Thyroid gland (tissue), 4 donors: ENCODE measurements at regions of chr1 and their contacts with region 1.

Region 1: GRCh38 chr1:27598902-27599528 is 4.9 kb downstream of the AHDC1 start:
- DNase-seq: peak; percentile 74 to 84
- H3K4me3 ChIP-seq: no peak overlapping the region
- H3K27ac ChIP-seq: peak overlapping the region; percentile 96 to 98 (median 97)
- H3K4me1 ChIP-seq: peaks cover 82 to 84% of the 10 kb centered on the region in 2 donors
- H3K27me3 ChIP-seq: no peaks in the 10 kb centered on the region
- CTCF ChIP-seq: no peak
- POLR2A ChIP-seq: no peak

Region 2: GRCh38 chr1:27481994-27482620 is 116.9 kb before region 1 on chr1:
- intact Hi-C with region 1: no loop called
- DNase-seq: no peak
- H3K4me3 ChIP-seq: no peak overlapping the region
- H3K27ac ChIP-seq: peak overlapping the region in 1 of 3 donors; percentile 2
- H3K4me1 ChIP-seq: peaks cover 23 to 41% of the 10 kb centered on the region in 2 donors
- H3K27me3 ChIP-seq: no peaks in the 10 kb centered on the region
- CTCF ChIP-seq: no peak
- POLR2A ChIP-seq: no peak

Region 3: DNA sequence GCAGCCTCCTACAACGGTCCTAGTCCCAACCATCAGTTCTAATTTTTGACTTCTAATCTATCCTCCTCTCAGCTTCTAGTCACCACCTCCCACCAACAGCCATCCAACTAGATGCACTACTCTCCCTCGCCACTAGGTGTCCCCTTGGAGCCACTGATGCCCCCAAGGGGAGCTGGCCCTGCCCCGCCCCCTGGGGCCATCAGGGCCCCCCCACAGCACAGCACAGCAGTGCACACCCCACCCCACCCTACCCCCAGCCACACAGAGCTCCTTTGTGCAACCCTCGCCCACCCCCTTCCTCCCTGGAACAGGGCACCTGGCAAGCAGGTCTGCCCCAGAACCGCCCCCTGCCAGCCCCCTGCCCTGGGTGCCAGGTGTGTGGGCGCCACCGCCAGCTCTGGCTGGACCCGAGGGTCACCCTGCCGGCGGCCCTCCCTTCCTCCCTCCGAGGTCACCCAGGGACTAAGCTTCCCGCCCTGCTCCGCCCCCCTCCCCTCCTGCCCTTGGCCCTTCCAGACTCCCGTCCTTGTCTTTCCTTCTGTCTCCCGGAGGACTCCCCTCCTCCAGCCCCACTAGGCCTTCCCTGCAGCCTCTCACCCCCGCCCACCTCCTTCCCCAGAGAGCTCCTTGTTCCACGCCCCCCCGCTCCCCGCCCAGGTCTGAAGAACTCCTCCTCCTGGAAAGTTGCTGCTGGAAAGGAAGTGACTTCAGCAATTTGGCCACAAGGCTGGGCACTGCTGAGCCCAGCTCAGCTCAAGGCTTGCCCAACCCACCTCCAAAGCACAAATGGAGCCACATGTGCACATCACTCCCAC is 42.0 kb before region 1 on chr1:
- intact Hi-C with region 1: loop called (anchors 5 kb)
- DNase-seq: peak; percentile 97 to 98
- H3K4me3 ChIP-seq: peak overlapping the region in 1 of 3 donors; percentile 1
- H3K27ac ChIP-seq: peak overlapping the region; percentile 60 to 82 (median 76)
- H3K4me1 ChIP-seq: peaks cover 41 to 50% of the 10 kb centered on the region in 2 donors
- H3K27me3 ChIP-seq: no peaks in the 10 kb centered on the region
- CTCF ChIP-seq: peak; percentile 78 to 96 (median 84)
- POLR2A ChIP-seq: peak in 1 of 2 donors; percentile 31

Region 4: GRCh38 chr1:27581823-27582243 is 17.2 kb before region 1 on chr1:
- intact Hi-C with region 1: no loop called
- DNase-seq: no peak
- H3K4me3 ChIP-seq: no peak overlapping the region
- H3K27ac ChIP-seq: peak overlapping the region in 2 of 3 donors; percentile 33 to 87
- H3K4me1 ChIP-seq: peaks cover 38 to 63% of the 10 kb centered on the region in 2 donors
- H3K27me3 ChIP-seq: no peaks in the 10 kb centered on the region
- CTCF ChIP-seq: no peak
- POLR2A ChIP-seq: no peak

Region 5: GRCh38 chr1:27704958-27705357 is 105.9 kb after region 1 on chr1:
- intact Hi-C with region 1: no loop called
- DNase-seq: no peak
- H3K4me3 ChIP-seq: no peak overlapping the region
- H3K27ac ChIP-seq: no peak overlapping the region
- H3K4me1 ChIP-seq: no peaks in the 10 kb centered on the region
- H3K27me3 ChIP-seq: no peaks in the 10 kb centered on the region
- CTCF ChIP-seq: no peak
- POLR2A ChIP-seq: no peak

Region 6: GRCh38 chr1:28606762-28607161 is 1007.7 kb after region 1 on chr1:
- intact Hi-C with region 1: no loop called
- DNase-seq: no peak
- H3K4me3 ChIP-seq: no peak overlapping the region
- H3K27ac ChIP-seq: no peak overlapping the region
- H3K4me1 ChIP-seq: no peaks in the 10 kb centered on the region
- H3K27me3 ChIP-seq: no peaks in the 10 kb centered on the region
- CTCF ChIP-seq: no peak
- POLR2A ChIP-seq: no peak